ENCODE measurements at regions of chr7 and their contacts with region 1.

Region 1: GRCh38 chr7:101815835-101816493 is 1.5 kb upstream of the CUX1 start:
- DNase-seq: peak; percentile 81 to 89
- ATAC-seq: peak; percentile 75
- H3K4me3 ChIP-seq: peak overlapping the region; percentile 94 to 100
- H3K27ac ChIP-seq: peak overlapping the region; percentile 61 to 97
- H3K4me1 ChIP-seq: no peaks in the 10 kb centered on the region
- H3K27me3 ChIP-seq: no peaks in the 10 kb centered on the region

Region 2: DNA sequence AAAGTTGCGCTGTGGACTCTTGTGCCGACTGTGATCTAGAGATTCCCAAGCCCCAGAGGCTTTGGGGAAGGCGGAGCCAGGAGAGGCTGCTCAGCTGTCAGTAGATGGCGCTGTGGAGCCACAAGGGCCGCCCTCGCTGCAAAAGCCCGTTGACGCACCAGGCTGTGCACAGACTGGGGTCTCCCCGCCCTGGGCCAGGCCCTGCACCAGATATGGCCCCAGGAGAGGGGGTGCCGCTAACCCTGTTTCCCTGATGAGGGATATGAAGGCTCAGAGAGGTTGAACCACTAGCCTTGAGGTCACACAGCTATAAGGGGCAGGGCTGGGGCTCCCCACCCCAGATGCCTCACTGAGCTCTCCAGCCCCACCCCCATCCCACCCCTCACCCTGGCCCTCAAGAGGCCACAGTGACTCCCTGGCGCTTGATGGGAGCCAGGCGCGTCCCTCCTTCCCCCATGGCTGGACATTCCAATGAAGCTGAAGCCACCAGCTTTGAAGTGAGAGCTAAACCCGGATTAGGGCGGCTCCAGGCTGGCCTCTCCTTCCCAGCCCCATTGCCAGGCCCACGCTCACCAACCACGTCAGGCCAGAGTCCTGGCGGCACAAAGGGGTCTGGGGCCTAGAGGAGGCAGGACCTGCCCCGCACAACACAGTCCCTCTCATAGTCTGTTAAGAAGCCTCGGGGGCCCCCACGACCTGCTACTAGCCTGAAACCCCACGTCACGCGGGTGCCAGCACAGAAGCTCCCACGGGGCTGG is 213.3 kb before region 1 on chr7:
- intact Hi-C with region 1: loop called (anchors 10 kb)
- DNase-seq: peak; percentile 90 to 94
- ATAC-seq: peak; percentile 87
- H3K4me3 ChIP-seq: no peak overlapping the region
- H3K27ac ChIP-seq: no peak overlapping the region
- H3K4me1 ChIP-seq: no peaks in the 10 kb centered on the region
- H3K27me3 ChIP-seq: no peaks in the 10 kb centered on the region

Region 3: GRCh38 chr7:101856473-101857357 is 40.8 kb after region 1 on chr7:
- intact Hi-C with region 1: loop called in 1 of 2 experiments (anchors 5 kb)
- DNase-seq: peak; percentile 91 to 94
- ATAC-seq: peak; percentile 93
- H3K4me3 ChIP-seq: no peak overlapping the region
- H3K27ac ChIP-seq: peak overlapping the region in 1 of 2 donors; percentile 1
- H3K4me1 ChIP-seq: peaks cover 0 to 3% of the 10 kb centered on the region in 2 donors
- H3K27me3 ChIP-seq: no peaks in the 10 kb centered on the region

Region 4: GRCh38 chr7:101924171-101924570 is 108.2 kb after region 1 on chr7:
- intact Hi-C with region 1: loop called in 1 of 2 experiments (anchors 5 kb)
- DNase-seq: peak; percentile 77 to 85
- ATAC-seq: peak; percentile 86
- H3K4me3 ChIP-seq: no peak overlapping the region
- H3K27ac ChIP-seq: peak overlapping the region; percentile 18 to 98
- H3K4me1 ChIP-seq: no peaks in the 10 kb centered on the region
- H3K27me3 ChIP-seq: no peaks in the 10 kb centered on the region

Region 5: GRCh38 chr7:102236592-102237287 is 420.8 kb after region 1 on chr7:
- intact Hi-C with region 1: loop called in 1 of 2 experiments (anchors 5 kb)
- DNase-seq: peak; percentile 61 to 82
- ATAC-seq: peak; percentile 79
- H3K4me3 ChIP-seq: no peak overlapping the region
- H3K27ac ChIP-seq: no peak overlapping the region
- H3K4me1 ChIP-seq: no peaks in the 10 kb centered on the region
- H3K27me3 ChIP-seq: no peaks in the 10 kb centered on the region

Measured in aorta (tissue), 5 donors.